ENCODE measurements at regions of chr14 and their contacts with region 1.

Region 1: DNA sequence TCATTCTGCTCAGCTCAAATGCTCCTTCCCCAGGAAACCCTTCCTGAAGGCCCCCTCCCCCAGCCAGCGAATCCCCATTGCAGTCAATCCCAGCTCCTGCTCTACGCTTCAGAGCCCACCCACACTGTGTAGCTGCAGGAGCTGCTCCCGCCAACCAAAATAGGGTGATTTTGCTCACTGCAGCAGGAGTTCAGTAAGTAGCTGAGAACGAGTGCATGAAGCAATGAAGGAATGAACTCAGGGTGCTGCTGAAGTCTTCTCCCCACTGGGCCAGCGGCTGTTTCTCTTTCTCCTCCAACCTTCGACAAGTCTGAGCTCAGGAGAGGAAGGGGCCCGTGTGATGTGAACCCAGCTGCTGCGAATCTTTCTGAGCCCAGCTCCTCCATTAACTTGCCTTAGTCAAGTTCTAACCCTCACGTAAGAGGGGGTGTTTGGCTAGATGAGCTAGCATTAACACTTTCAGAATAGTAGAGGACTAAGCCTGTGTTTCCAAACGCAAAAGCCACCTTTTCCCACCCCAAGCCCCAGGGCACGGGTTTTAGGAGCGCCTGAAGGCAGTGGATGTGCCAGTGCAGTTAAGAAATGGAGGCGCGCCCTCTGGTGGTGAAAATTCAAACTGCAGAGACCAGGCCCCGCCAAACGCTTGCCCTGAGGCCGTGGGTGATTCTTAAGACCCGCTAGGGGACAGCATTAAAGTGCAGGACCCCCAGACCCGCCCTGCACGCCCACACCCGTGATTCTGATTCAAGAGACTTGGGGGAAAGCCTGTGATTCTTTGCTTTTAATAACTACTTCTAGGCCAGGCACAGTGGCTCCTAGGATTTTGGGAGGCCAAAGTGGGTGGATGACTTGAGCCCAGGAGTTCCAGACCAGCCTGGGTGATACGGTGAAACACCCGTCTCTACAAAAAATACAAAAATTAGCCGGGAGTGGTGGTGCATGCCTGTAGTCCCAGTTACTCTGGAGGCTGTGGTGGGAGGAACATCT is 11.9 kb upstream of the SERPINA4 start:
- DNase-seq: peak; percentile 67
- CTCF ChIP-seq: peak; percentile 73

Region 2: DNA sequence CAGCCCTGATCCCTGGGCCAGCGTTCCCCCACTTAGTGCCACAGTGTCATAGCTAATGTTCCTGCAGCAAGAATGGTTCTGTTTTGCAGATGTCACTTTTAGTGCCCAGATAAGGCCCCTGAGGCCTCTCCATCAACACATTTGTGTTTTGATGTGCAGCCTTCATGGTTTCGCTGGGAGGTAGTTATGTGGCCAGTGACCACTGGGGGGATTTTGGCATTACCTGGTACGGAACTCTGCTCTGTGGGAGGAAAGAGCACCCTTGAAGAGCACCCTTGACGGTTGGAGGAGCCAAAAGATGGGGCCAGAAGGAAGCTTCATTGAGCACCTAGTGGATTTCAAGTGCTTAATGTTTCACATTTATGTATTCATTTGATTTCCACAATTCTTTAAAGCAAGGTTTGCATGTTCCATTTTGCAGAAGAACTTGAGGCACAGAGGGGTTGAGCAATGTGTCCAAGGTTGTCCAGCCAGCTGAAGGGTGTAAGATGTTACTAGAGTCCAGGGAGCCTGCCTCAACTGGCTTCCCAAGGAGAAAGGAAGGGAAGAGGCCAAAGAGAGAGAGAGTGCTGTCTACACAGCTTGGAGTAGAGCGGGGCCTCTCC is 109.7 kb before region 1 on chr14:
- CTCF ChIA-PET with region 1: interaction called, 21 read pairs
- POLR2A ChIA-PET with region 1: no interaction called
- DNase-seq: no peak
- CTCF ChIP-seq: no peak

Region 3: GRCh38 chr14:94536823-94537222 is 12.5 kb before region 1 on chr14:
- CTCF ChIA-PET with region 1: interaction called, 77 read pairs
- POLR2A ChIA-PET with region 1: no interaction called
- DNase-seq: no peak
- CTCF ChIP-seq: no peak

Region 4: GRCh38 chr14:94559638-94560290 is 10.5 kb after region 1 on chr14:
- CTCF ChIA-PET with region 1: interaction called, 28 read pairs
- POLR2A ChIA-PET with region 1: no interaction called
- DNase-seq: no peak
- CTCF ChIP-seq: no peak